Kidney (tissue), 22 donors: ENCODE measurements at regions of chr16 and their contacts with region 1.

Region 1: GRCh38 chr16:68244903-68245853 is at the start of gene PLA2G15:
- DNase-seq: peak; percentile 95 to 99 (median 97)
- H3K4me3 ChIP-seq: peak within 1 kb of the TSS; percentile 81 to 99 (median 94)
- H3K27ac ChIP-seq: peak within 1 kb of the TSS; percentile 69 to 83
- H3K4me1 ChIP-seq: peaks cover 0 to 40% (median 33%) of the 10 kb centered on the region in 3 donors
- H3K27me3 ChIP-seq: no peaks in the 10 kb centered on the region
- CTCF ChIP-seq: no peak
- total RNA-seq, gene PLA2G15: 35.1 TPM

Region 2: DNA sequence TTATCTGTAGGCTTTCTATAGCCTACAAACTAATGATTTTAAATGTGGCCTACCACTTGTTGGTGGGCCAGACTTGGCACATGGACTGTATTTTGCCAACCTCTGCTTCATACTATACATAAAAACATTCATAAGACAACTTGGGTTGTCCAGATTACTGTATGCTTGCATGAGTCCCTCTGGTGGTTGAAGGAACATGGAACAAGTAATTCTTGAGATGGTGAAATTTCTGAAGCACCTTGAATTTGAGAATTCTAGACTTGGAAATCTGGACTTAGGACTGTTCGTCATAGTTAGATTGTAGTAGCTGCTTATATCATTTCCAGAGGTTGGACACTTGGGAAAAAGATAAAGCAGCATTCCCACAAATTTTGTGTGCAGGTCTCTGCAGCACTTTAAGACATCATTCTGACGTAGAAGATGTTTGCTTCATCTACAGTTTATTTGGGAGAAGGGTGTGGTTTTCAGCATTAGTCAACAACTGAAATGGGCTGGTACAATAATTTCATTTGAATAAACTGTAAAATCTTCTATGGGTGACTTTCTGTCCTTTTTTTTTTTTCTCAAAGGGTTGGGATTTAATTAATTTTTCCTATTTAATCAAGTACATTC is 128.8 kb before region 1 on chr16:
- intact Hi-C with region 1: no loop called
- DNase-seq: peak in 1 of 5 donors; percentile 31
- H3K4me3 ChIP-seq: no peak overlapping the region
- H3K27ac ChIP-seq: no peak overlapping the region
- H3K4me1 ChIP-seq: peaks cover 0 to 7% (median 0%) of the 10 kb centered on the region in 3 donors
- H3K27me3 ChIP-seq: no peaks in the 10 kb centered on the region
- CTCF ChIP-seq: peak; percentile 36

Region 3: GRCh38 chr16:68328151-68328859 is 83.1 kb after region 1 on chr16:
- intact Hi-C with region 1: loop called (anchors 5 kb)
- DNase-seq: peak; percentile 83 to 92 (median 85)
- H3K4me3 ChIP-seq: no peak overlapping the region
- H3K27ac ChIP-seq: peak overlapping the region in 1 of 2 donors; percentile 12
- H3K4me1 ChIP-seq: peaks cover 8 to 12% (median 11%) of the 10 kb centered on the region in 3 donors
- H3K27me3 ChIP-seq: no peaks in the 10 kb centered on the region
- CTCF ChIP-seq: peak; percentile 98

Region 4: GRCh38 chr16:68382296-68382718 is 137.1 kb after region 1 on chr16:
- intact Hi-C with region 1: no loop called
- DNase-seq: peak in 2 of 5 donors; percentile 45 to 60
- H3K4me3 ChIP-seq: no peak overlapping the region
- H3K27ac ChIP-seq: no peak overlapping the region
- H3K4me1 ChIP-seq: no peaks in the 10 kb centered on the region
- H3K27me3 ChIP-seq: no peaks in the 10 kb centered on the region
- CTCF ChIP-seq: no peak